ENCODE measurements at regions of chr20 and their contacts with region 1.

Region 1: DNA sequence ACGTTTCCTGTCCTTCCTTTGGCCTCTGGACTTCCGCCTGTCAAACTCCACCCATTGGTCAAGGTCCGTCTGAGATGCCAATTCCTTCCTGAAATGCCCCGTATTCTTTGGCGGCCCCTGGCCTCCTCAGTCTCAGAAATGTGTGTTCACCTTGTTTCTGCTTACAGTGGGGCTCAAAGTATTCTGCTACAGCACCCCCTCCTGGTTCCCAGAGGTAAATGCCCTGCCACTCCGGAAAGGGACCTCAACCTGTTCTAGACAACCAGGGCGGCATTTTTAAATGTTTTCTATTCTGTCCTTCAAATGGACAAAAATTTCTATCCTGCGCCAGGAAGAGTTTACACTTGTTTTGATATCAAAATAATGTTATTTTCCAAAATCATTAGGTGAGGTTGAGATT is 12.1 kb upstream of the PAX1 start:
- H3K4me3 ChIP-seq: no peak overlapping the region
- H3K27ac ChIP-seq: no peak overlapping the region
- H3K4me1 ChIP-seq: no peaks in the 10 kb centered on the region
- CTCF ChIP-seq: 0 out of 2 replicates have a peak, but pooled peaks have one; percentile 27

Region 2: DNA sequence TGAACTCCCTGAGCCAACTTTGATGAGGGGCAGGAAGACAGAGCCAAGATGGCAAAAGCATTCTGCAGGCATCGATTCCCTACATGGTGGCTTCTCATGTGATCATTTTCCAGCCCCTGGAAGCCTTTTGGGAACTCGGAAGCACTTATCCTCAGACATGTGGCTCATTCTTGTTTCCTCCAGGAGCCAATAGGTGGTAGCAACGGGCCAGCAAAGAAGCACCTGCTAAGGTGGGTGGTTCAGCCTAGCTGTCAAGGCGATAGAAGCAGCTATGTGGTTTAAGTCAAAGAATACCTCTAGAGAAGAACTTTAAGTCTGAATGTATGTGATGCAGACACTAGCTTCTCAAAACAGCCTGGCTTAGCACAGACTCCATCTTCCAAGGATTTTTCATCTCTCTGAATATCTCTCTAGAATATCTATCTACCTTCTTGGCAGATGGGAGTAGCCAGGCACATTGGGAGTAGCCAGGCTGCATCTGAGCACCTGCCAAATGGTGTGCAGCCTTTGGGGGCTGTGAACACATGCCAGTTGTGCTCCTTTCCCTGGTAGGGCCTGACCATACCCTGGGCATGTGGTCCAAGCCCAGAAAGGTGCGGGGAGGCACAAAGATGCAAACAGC is 52.6 kb before region 1 on chr20:
- CTCF ChIA-PET with region 1: interaction called, 23 read pairs
- POLR2A ChIA-PET with region 1: no interaction called
- H3K4me3 ChIP-seq: no peak overlapping the region
- H3K27ac ChIP-seq: no peak overlapping the region
- H3K4me1 ChIP-seq: no peaks in the 10 kb centered on the region
- CTCF ChIP-seq: peak; percentile 50; the same call in 1 of the 2 replicates